ENCODE measurements at regions of chr18 and their contacts with region 1.

Region 1: GRCh38 chr18:76721207-76721996 is 101.0 kb upstream of the ZNF236 start:
- DNase-seq: peak; percentile 29 to 89 (median 84)
- ATAC-seq: peak; percentile 95
- H3K4me3 ChIP-seq: peak overlapping the region; percentile 43
- H3K4me3 Mint-ChIP-seq: peak overlapping the region; percentile 78 to 94 (median 85)
- H3K27ac ChIP-seq: no peak overlapping the region
- H3K27ac Mint-ChIP-seq: peak overlapping the region; percentile 16 to 89 (median 84)
- H3K4me1 ChIP-seq: peaks cover 41 to 45% of the 10 kb centered on the region in 2 donors
- H3K4me1 Mint-ChIP-seq: peaks cover 34 to 62% (median 50%) of the 10 kb centered on the region in 7 donors
- H3K27me3 ChIP-seq: no peaks in the 10 kb centered on the region
- H3K27me3 Mint-ChIP-seq: peaks cover 0 to 30% (median 0%) of the 10 kb centered on the region in 5 donors

Region 2: DNA sequence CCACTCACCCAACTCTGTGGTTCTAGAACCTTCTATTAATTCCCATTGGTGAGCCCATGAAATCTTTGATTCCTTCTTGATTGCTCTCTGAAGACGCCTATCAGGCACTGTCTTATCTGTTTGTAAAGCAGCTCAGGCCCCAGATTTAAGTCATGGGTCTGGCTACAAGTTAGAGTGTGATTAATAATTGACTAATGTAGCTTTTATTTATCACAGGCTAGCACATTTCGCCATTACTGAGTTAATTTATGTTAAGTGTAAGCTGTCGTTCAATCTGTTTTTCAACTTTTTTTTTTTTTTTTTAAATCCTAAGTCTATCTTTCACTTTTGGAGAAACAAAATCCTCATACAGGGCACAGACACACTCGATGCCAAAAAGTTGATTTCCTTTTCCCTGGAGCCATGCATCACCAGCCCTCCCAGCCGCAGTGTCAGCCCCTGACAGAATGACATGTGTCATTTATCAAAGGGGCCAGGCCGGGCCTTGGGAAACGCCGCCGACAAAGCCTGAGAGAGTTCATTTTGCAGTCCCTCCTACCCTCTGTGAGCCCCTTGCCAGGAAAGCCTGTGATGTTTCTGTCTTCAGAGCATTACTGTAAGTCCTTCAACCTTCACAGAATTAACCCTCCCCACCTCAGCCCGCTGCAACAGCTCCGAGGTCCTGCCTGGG is 1495.0 kb before region 1 on chr18:
- CTCF ChIA-PET with region 1: no interaction called
- POLR2A ChIA-PET with region 1: no interaction called
- intact Hi-C with region 1: no loop called
- DNase-seq: no peak
- ATAC-seq: no peak
- H3K4me3 ChIP-seq: no peak overlapping the region
- H3K4me3 Mint-ChIP-seq: peak overlapping the region; percentile 20 to 84 (median 73)
- H3K27ac ChIP-seq: peak overlapping the region; percentile 37
- H3K27ac Mint-ChIP-seq: peak overlapping the region in 8 of 9 donors; percentile 36 to 86 (median 81)
- H3K4me1 ChIP-seq: peaks cover 0 to 19% of the 10 kb centered on the region in 2 donors
- H3K4me1 Mint-ChIP-seq: peaks cover 18 to 98% (median 87%) of the 10 kb centered on the region in 7 donors
- H3K27me3 ChIP-seq: no peaks in the 10 kb centered on the region
- H3K27me3 Mint-ChIP-seq: no peaks in the 10 kb centered on the region

Region 3: GRCh38 chr18:76476665-76477561 is 244.5 kb before region 1 on chr18:
- CTCF ChIA-PET with region 1: no interaction called
- POLR2A ChIA-PET with region 1: interaction called, 10 read pairs
- intact Hi-C with region 1: no loop called
- DNase-seq: no peak
- ATAC-seq: no peak
- H3K4me3 ChIP-seq: no peak overlapping the region
- H3K4me3 Mint-ChIP-seq: peak overlapping the region in 8 of 10 donors; percentile 5 to 72 (median 50)
- H3K27ac ChIP-seq: no peak overlapping the region
- H3K27ac Mint-ChIP-seq: peak overlapping the region in 4 of 9 donors; percentile 26 to 72 (median 28)
- H3K4me1 ChIP-seq: peaks cover 0 to 7% of the 10 kb centered on the region in 2 donors
- H3K4me1 Mint-ChIP-seq: peaks cover 4 to 74% (median 58%) of the 10 kb centered on the region in 7 donors
- H3K27me3 ChIP-seq: no peaks in the 10 kb centered on the region
- H3K27me3 Mint-ChIP-seq: peaks cover 0 to 36% (median 0%) of the 10 kb centered on the region in 5 donors

Region 4: DNA sequence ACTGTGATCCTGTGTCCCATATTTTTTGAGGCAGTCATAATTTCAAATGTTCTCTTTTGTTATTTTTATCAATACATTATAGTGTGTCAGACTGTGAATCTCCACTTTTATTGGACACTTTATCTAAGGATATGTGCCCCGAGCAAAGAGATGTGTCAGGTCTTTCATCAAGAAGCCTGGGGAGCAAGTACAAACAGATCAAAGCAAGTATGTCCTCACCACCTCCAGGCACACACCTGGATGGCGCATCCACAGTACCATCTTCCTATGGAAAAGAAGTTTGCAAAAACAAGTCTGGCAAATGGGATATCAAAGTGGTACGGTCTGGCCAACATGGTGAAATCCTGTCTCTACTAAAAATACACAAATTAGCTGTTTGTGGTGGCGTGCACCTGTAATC is 20.0 kb after region 1 on chr18:
- CTCF ChIA-PET with region 1: no interaction called
- POLR2A ChIA-PET with region 1: interaction called, 3 read pairs
- intact Hi-C with region 1: loop called in 1 of 2 experiments (anchors 2 kb)
- DNase-seq: no peak
- ATAC-seq: no peak
- H3K4me3 ChIP-seq: no peak overlapping the region
- H3K4me3 Mint-ChIP-seq: no peak overlapping the region
- H3K27ac ChIP-seq: no peak overlapping the region
- H3K27ac Mint-ChIP-seq: no peak overlapping the region
- H3K4me1 ChIP-seq: no peaks in the 10 kb centered on the region
- H3K4me1 Mint-ChIP-seq: peaks cover 0 to 20% (median 0%) of the 10 kb centered on the region in 7 donors
- H3K27me3 ChIP-seq: no peaks in the 10 kb centered on the region
- H3K27me3 Mint-ChIP-seq: peaks cover 0 to 53% (median 6%) of the 10 kb centered on the region in 5 donors

Region 5: GRCh38 chr18:76803814-76804213 is 82.4 kb after region 1 on chr18:
- CTCF ChIA-PET with region 1: interaction called, 8 read pairs
- POLR2A ChIA-PET with region 1: no interaction called
- intact Hi-C with region 1: loop called in 1 of 2 experiments (anchors 5 kb)
- DNase-seq: peak; percentile 33 to 73 (median 66)
- ATAC-seq: peak; percentile 84
- H3K4me3 ChIP-seq: no peak overlapping the region
- H3K4me3 Mint-ChIP-seq: peak overlapping the region in 9 of 10 donors; percentile 27 to 71 (median 53)
- H3K27ac ChIP-seq: no peak overlapping the region
- H3K27ac Mint-ChIP-seq: peak overlapping the region in 4 of 9 donors; percentile 4 to 40 (median 4)
- H3K4me1 ChIP-seq: peaks cover 5 to 8% of the 10 kb centered on the region in 2 donors
- H3K4me1 Mint-ChIP-seq: peaks cover 6 to 13% (median 8%) of the 10 kb centered on the region in 7 donors
- H3K27me3 ChIP-seq: no peaks in the 10 kb centered on the region
- H3K27me3 Mint-ChIP-seq: peaks cover 0 to 17% (median 7%) of the 10 kb centered on the region in 5 donors

Region 6: GRCh38 chr18:77101410-77102258 is 380.2 kb after region 1 on chr18:
- CTCF ChIA-PET with region 1: no interaction called
- POLR2A ChIA-PET with region 1: no interaction called
- intact Hi-C with region 1: loop called (anchors 5 to 10 kb)
- DNase-seq: peak in 2 of 9 donors; percentile 26 to 73
- ATAC-seq: peak; percentile 62
- H3K4me3 ChIP-seq: peak overlapping the region; percentile 45
- H3K4me3 Mint-ChIP-seq: peak overlapping the region; percentile 65 to 92 (median 82)
- H3K27ac ChIP-seq: peak overlapping the region; percentile 73
- H3K27ac Mint-ChIP-seq: peak overlapping the region; percentile 94 to 99 (median 98)
- H3K4me1 ChIP-seq: peaks cover 88 to 94% of the 10 kb centered on the region in 2 donors
- H3K4me1 Mint-ChIP-seq: peaks cover 71 to 100% (median 94%) of the 10 kb centered on the region in 7 donors
- H3K27me3 ChIP-seq: no peaks in the 10 kb centered on the region
- H3K27me3 Mint-ChIP-seq: no peaks in the 10 kb centered on the region

Measured in naive thymus-derived CD4-positive, alpha-beta T cell (primary cell).